ENCODE measurements at regions of chr3 and their contacts with region 1.

Region 1: GRCh38 chr3:37210230-37210629 is 35.8 kb upstream of the LRRFIP2 start:
- DNase-seq: no peak
- ATAC-seq: no peak
- H3K4me3 Mint-ChIP-seq: no peak overlapping the region
- H3K27ac Mint-ChIP-seq: no peak overlapping the region
- H3K4me1 Mint-ChIP-seq: no peaks in the 10 kb centered on the region
- H3K27me3 Mint-ChIP-seq: no peaks in the 10 kb centered on the region
- CTCF ChIP-seq: no peak

Region 2: DNA sequence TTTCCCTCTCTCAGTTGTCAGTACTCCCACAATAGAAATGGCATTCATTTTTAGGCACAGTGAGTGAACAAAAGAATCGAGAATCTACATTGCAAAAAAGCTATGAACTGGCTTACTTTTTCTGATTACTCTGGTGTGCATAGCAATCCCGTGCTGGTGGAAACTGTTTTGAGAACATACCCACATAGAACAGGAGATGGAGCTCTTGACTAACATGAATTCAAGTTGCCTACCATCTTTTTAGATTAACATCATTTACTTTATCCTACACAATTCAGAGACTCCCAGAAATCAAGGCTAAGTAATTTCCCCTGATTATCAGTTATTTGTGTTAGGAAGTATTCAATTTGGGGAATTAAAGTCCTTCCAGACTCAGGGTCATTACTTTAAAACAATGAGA is 1244.3 kb before region 1 on chr3:
- CTCF ChIA-PET with region 1: no interaction called
- POLR2A ChIA-PET with region 1: no interaction called
- intact Hi-C with region 1: loop called (anchors 5 kb)
- DNase-seq: no peak
- ATAC-seq: no peak
- H3K4me3 Mint-ChIP-seq: no peak overlapping the region
- H3K27ac Mint-ChIP-seq: no peak overlapping the region
- H3K4me1 Mint-ChIP-seq: peaks cover 8% of the 10 kb centered on the region
- H3K27me3 Mint-ChIP-seq: no peaks in the 10 kb centered on the region
- CTCF ChIP-seq: no peak

Region 3: DNA sequence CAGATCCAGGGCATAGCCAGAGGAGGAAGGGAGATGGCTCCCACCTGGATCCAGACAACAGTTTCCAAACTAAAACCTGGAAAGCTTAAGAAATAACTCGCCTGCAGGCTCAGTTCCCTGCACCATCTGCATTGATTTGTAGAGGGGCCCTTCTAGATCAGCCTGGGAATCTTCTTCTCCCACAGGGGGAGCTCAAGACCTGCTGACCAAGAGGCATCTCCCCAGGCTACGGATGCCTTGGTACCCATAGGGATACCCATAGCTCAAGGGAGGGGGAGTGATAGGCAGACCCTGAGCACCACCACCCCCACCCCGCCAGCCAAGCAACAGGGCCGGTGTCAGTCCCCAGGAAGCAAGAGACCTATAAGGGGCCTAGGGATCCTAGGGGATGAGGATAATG is 417.9 kb before region 1 on chr3:
- CTCF ChIA-PET with region 1: no interaction called
- POLR2A ChIA-PET with region 1: interaction called, 5 read pairs
- intact Hi-C with region 1: loop called (anchors 1 kb)
- DNase-seq: no peak
- ATAC-seq: peak; percentile 37
- H3K4me3 Mint-ChIP-seq: no peak overlapping the region
- H3K27ac Mint-ChIP-seq: no peak overlapping the region
- H3K4me1 Mint-ChIP-seq: no peaks in the 10 kb centered on the region
- H3K27me3 Mint-ChIP-seq: peaks cover 7% of the 10 kb centered on the region
- CTCF ChIP-seq: no peak

Region 4: GRCh38 chr3:37024092-37024491 is 186.1 kb before region 1 on chr3:
- CTCF ChIA-PET with region 1: interaction called, 14 read pairs
- POLR2A ChIA-PET with region 1: no interaction called
- intact Hi-C with region 1: loop called (anchors 1 kb)
- DNase-seq: no peak
- ATAC-seq: peak; percentile 42
- H3K4me3 Mint-ChIP-seq: no peak overlapping the region
- H3K27ac Mint-ChIP-seq: no peak overlapping the region
- H3K4me1 Mint-ChIP-seq: peaks cover 7% of the 10 kb centered on the region
- H3K27me3 Mint-ChIP-seq: no peaks in the 10 kb centered on the region
- CTCF ChIP-seq: no peak